ENCODE measurements at regions of chr15 and their contacts with region 1.

Region 1: GRCh38 chr15:41331833-41332787 is at the start of gene OIP5:
- DNase-seq: peak; percentile 98 to 99
- ATAC-seq: peak; percentile 99 to 100 (median 100)
- H3K4me3 ChIP-seq: peak within 1 kb of the TSS; percentile 84
- H3K27ac ChIP-seq: peak within 1 kb of the TSS; percentile 81
- H3K4me1 ChIP-seq: no peaks in the 10 kb centered on the region
- H3K27me3 ChIP-seq: no peaks in the 10 kb centered on the region
- CTCF ChIP-seq: peak; percentile 78
- total RNA-seq, gene OIP5: 0.89 to 5.4 (median 2.5) TPM

Region 2: DNA sequence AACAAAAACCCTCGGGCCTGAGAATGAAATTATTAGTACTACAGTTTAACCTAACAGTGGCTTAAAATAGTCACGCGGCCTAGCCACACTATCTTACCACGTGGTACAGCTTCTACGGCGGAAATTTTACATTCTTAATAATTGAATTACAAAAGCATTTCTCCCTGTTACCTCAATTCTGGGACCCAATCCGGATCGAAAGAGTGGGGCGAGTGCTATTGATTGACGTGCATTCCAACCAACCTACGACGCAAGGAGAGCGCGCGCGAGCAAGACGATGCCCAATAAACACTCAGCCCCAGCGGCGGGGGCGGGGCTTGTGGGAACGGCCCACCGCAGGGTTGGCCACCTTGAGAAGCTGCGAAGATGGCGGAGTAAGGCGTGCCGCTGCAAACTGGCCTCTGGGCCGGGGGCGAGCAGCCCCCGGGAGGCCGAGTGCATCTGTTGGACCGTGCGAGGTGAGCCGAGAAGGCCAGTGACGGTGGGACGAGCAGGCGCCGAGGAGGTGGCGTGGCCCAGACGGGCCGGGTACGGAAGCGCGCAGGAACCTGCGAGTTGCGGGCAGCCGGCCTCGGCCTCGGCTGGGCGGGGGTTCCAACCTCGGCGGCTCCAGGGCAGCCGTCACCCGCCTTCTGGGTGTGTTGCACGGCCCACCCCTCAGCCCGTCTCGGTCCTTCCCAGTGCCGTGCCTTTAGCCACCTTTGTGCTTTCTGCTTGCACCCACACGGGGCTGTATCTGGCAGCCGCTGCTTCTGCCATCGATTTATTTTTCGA is 48.3 kb before region 1 on chr15:
- intact Hi-C with region 1: loop called in 1 of 2 experiments (anchors 5 kb)
- DNase-seq: peak; percentile 98
- ATAC-seq: peak; percentile 99 to 100 (median 99)
- H3K4me3 ChIP-seq: peak overlapping the region; percentile 100
- H3K27ac ChIP-seq: peak overlapping the region; percentile 95
- H3K4me1 ChIP-seq: peaks cover 26% of the 10 kb centered on the region
- H3K27me3 ChIP-seq: no peaks in the 10 kb centered on the region
- CTCF ChIP-seq: no peak

Region 3: GRCh38 chr15:41291065-41291631 is 41.0 kb before region 1 on chr15:
- intact Hi-C with region 1: loop called (anchors 5 kb)
- DNase-seq: no peak
- ATAC-seq: peak in 1 of 4 donors; percentile 21
- H3K4me3 ChIP-seq: no peak overlapping the region
- H3K27ac ChIP-seq: peak overlapping the region; percentile 46
- H3K4me1 ChIP-seq: peaks cover 21% of the 10 kb centered on the region
- H3K27me3 ChIP-seq: no peaks in the 10 kb centered on the region
- CTCF ChIP-seq: no peak

Region 4: GRCh38 chr15:41407341-41407740 is 75.2 kb after region 1 on chr15:
- intact Hi-C with region 1: no loop called
- DNase-seq: no peak
- ATAC-seq: no peak
- H3K4me3 ChIP-seq: no peak overlapping the region
- H3K27ac ChIP-seq: no peak overlapping the region
- H3K4me1 ChIP-seq: peaks cover 5% of the 10 kb centered on the region
- H3K27me3 ChIP-seq: no peaks in the 10 kb centered on the region
- CTCF ChIP-seq: no peak